ENCODE measurements at regions of chr7 and their contacts with region 1.

Region 1: DNA sequence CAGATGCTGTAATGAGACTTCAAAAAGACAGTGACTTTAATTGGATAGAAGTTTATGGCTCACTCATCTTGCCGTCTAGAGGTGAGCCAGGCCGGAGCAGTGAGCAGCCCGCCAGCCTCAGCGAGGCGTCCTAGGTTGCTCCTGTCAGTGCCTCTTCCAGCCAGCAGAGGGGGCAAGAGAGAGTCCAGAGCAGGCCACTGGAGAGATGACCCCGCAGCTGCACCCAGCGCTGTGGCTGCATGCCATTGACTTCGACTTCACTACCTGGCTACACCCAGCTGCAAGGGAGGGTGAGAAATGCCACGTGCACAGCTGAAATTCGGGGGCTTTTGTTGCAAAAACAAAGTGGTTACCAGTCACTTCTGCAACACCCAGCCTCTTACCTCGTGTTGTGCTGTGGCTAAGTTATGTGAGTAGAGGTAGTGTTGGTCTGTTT is 26.5 kb downstream of the NUB1 start:
- DNase-seq: peak; percentile 85
- H3K4me3 Mint-ChIP-seq: no peak overlapping the region
- H3K27ac Mint-ChIP-seq: no peak overlapping the region
- H3K4me1 Mint-ChIP-seq: peaks cover 11% of the 10 kb centered on the region
- H3K27me3 Mint-ChIP-seq: no peaks in the 10 kb centered on the region

Region 2: GRCh38 chr7:151351027-151351426 is 17.1 kb before region 1 on chr7:
- CTCF ChIA-PET with region 1: interaction called, 36 read pairs
- DNase-seq: peak; percentile 46
- H3K4me3 Mint-ChIP-seq: peak overlapping the region; percentile 63
- H3K27ac Mint-ChIP-seq: peak overlapping the region; percentile 94
- H3K4me1 Mint-ChIP-seq: peaks cover 52% of the 10 kb centered on the region
- H3K27me3 Mint-ChIP-seq: no peaks in the 10 kb centered on the region

Region 3: DNA sequence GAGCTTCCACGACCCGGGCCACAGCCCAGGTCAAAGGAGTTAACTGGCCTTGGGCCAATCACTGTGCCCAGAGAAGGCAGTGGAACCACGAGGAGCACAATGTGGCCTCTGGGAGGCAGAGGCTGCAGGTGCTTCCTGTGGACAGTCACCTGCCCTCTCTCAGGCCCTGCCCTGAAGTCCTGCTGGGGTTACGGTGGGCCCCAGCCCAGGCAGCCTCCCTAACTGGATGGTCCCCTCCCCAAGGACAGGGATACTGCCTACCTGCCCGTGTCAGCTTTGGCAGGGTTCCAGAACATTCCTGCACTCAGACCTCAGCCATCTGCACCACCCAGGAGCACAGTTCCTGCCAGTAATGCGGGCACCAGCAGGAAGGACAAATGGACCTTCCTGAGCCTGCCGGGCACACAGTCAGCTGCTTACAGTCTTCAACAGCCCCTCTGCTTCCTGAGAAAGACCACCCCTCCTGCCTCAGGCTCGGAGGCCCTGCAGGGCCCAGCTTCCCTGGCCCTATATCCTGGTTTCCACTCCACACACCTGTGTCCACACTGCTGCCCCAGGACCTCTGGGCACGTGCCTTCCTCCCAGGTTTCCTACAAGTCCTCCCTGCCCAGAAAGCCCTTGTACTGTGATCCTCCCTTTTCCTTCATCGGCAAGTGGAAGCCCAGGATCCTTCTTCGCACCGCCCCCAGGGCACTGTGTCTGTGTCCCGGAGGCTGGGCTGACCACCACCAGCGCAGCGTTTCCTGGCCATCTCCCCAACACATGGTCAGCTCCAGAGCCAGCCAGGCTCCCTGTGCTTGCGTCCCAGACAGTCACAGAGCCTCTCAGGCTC is 18.4 kb after region 1 on chr7:
- CTCF ChIA-PET with region 1: no interaction called
- DNase-seq: no peak
- H3K4me3 Mint-ChIP-seq: no peak overlapping the region
- H3K27ac Mint-ChIP-seq: peak overlapping the region; percentile 21
- H3K4me1 Mint-ChIP-seq: peaks cover 7% of the 10 kb centered on the region
- H3K27me3 Mint-ChIP-seq: peaks cover 84% of the 10 kb centered on the region